GM23248 (cell line): ENCODE measurements at regions of chr12 and their contacts with region 1.

Region 1: GRCh38 chr12:15001733-15002382 is 29.0 kb downstream of the PDE6H start:
- DNase-seq: peak; percentile 38
- H3K4me3 ChIP-seq: no peak overlapping the region
- H3K27ac ChIP-seq: no peak overlapping the region
- H3K4me1 ChIP-seq: peaks cover 7% of the 10 kb centered on the region; the same call in 1 of the 2 replicates
- H3K27me3 ChIP-seq: peaks cover 40% of the 10 kb centered on the region

Region 2: GRCh38 chr12:14723763-14724162 is 278.1 kb before region 1 on chr12:
- in situ Hi-C with region 1: loop called (anchors 10 kb)
- DNase-seq: peak; percentile 74
- H3K4me3 ChIP-seq: no peak overlapping the region
- H3K27ac ChIP-seq: no peak overlapping the region
- H3K4me1 ChIP-seq: no peaks in the 10 kb centered on the region
- H3K27me3 ChIP-seq: no peaks in the 10 kb centered on the region

Region 3: GRCh38 chr12:14948672-14949071 is 53.2 kb before region 1 on chr12:
- in situ Hi-C with region 1: no loop called
- DNase-seq: peak; percentile 75
- H3K4me3 ChIP-seq: peak overlapping the region; percentile 45
- H3K27ac ChIP-seq: peak overlapping the region; percentile 70
- H3K4me1 ChIP-seq: peaks cover 29% of the 10 kb centered on the region
- H3K27me3 ChIP-seq: no peaks in the 10 kb centered on the region

Region 4: DNA sequence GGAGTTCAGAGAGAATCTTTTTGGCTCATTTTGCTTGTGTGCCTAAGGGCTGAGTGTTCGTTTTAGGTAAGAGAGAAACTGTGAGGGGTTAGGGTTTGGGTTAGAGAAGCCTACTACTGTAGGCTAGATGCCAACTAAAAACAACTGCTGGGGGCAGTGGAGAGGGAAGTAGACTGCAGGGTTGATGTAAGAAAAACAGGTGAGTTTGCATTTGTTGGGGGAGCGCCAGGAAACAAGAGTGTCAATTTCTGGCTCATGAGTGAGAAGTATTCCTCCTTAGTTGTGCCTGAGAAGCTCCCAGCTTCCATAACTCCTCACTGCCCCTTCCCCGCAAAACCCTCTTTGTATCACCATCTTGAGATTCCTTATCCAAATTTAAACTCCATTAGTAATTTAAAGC is 1001.6 kb after region 1 on chr12:
- in situ Hi-C with region 1: no loop called
- DNase-seq: no peak
- H3K4me3 ChIP-seq: no peak overlapping the region
- H3K27ac ChIP-seq: no peak overlapping the region
- H3K4me1 ChIP-seq: no peaks in the 10 kb centered on the region
- H3K27me3 ChIP-seq: no peaks in the 10 kb centered on the region